ENCODE measurements at regions of chr11 and their contacts with region 1.

Region 1: DNA sequence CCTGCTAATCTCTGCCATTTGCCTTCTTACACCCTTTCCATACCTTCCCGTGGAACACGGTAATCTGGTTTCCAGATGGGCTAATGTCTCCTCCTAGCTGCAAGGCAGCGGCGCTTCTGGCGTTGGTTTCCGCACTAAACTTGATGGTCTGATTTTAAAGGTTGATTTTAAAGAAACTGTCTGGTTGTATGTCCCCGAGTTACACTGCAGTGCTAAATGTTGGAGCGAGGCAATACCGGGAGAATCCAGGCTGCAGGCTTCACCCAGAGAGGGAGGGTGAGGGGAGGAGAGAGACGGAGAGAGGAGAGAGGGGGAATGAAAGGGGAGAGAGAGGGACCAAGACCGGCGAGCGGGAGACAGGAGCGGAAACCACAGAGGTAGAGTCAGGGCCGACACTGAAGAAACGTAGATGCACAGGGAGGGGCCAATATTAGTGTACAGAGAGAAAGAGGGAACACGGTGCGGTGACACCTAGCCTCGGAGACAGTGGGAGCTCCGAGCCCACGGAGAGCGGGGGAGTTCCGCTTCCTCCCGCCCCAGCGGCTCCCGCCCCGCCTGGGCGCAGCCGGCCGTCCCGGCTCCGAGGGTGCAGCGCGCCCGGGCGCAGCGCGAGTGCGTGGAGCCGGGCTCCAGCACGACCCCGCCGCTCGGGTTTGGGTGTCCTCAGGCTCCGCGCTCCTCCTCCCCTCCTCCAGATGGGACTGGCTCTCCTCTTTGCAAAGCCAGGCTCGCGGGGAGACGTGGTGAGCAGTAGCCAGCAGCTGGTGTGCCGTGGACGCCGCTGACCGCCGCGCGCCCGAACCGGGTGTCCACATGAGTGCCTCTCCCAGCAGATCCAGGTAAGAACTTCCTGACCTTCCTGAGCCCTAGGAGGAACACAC is 71.9 kb upstream of the GRAMD1B start:
- DNase-seq: peak; percentile 88
- H3K4me3 Mint-ChIP-seq: peak overlapping the region; percentile 98
- H3K27ac Mint-ChIP-seq: peak overlapping the region; percentile 98
- H3K4me1 Mint-ChIP-seq: peaks cover 62% of the 10 kb centered on the region
- H3K27me3 Mint-ChIP-seq: no peaks in the 10 kb centered on the region

Region 2: DNA sequence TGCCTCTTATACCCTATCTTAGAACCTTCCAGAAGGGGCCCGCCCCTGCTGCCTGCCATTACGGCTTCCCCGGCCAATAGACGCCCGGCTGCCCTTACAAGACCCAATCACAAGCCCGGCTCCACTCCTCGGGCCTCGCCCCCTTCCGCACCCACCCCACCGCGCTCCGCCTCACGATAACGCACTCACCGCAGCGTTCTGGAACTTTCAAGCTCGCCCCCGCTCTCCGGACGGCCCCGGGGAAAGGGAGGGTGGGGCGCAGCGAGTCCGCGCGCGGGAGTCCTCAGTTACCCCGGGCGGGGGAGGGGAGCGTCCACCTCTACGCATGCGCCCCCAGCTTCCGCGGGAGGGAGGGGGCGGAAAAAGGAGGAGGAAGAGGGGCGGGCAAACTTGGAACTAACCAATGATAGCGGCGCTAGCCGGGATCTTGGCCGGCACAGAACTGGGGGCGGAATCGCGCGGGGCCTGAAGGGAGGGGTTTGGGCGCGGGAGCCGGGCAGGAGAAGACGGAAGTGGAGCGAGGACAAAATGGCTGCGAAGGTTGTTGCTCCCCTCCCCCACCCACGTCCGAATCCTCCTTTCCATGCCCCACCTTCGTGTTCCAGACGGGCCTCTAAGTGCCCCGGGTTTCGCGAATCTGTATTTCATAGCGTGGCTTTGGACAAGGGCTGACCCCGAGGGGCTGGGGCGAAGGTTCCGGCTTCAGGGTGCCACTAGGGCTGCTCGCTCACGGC is 295.9 kb before region 1 on chr11:
- intact Hi-C with region 1: loop called (anchors 2 kb)
- DNase-seq: peak; percentile 100
- H3K4me3 Mint-ChIP-seq: peak overlapping the region; percentile 100
- H3K27ac Mint-ChIP-seq: peak overlapping the region; percentile 99
- H3K4me1 Mint-ChIP-seq: peaks cover 46% of the 10 kb centered on the region
- H3K27me3 Mint-ChIP-seq: peaks cover 1% of the 10 kb centered on the region

Region 3: GRCh38 chr11:123338330-123339005 is 19.7 kb before region 1 on chr11:
- intact Hi-C with region 1: loop called (anchors 1 kb)
- DNase-seq: no peak
- H3K4me3 Mint-ChIP-seq: no peak overlapping the region
- H3K27ac Mint-ChIP-seq: no peak overlapping the region
- H3K4me1 Mint-ChIP-seq: peaks cover 6% of the 10 kb centered on the region
- H3K27me3 Mint-ChIP-seq: peaks cover 11% of the 10 kb centered on the region

Region 4: DNA sequence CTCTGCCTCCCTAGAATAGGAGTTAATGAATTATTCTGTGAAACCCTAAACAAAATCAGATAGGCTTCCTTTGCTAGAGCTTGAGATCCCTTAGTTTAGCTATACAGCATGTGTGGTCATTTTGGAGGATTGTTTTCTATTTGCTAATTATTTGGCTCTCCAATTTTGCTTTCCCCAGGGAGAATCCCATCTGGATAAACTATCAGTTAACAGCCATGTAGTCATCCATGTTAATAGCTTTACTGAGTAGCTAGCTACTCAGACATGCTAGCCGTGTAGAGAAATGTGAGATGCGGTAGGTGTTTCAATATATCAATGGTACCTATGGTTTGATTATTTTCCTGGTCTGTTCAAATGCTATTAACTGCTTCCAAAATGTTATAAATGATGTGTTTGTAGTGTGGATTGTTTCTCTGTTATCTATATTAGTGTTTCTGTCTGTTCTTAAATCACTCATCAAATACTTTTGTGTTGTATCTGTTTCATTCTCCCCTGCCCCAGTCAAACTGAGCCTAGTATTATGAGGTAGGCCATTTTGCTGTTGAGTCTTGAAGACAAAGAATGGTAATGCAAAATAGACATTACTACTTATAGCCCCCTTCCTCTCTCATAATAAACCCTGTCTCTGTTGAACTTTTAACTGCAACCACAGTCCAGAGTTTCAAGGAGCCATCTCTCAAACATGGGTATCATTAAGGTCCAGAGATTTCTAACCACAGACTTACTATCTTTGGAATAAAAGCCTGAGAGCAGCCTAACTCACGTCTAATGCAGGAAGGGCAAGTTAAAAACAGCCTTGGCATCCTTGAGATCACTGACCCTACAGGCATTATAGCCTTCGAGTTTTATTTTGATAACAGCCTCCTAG is 15.8 kb after region 1 on chr11:
- intact Hi-C with region 1: no loop called
- DNase-seq: no peak
- H3K4me3 Mint-ChIP-seq: no peak overlapping the region
- H3K27ac Mint-ChIP-seq: peak overlapping the region; percentile 19
- H3K4me1 Mint-ChIP-seq: peaks cover 52% of the 10 kb centered on the region
- H3K27me3 Mint-ChIP-seq: no peaks in the 10 kb centered on the region

Region 5: GRCh38 chr11:123407130-123407995 is 49.2 kb after region 1 on chr11:
- intact Hi-C with region 1: loop called (anchors 1 kb)
- DNase-seq: peak; percentile 88
- H3K4me3 Mint-ChIP-seq: peak overlapping the region; percentile 85
- H3K27ac Mint-ChIP-seq: peak overlapping the region; percentile 77
- H3K4me1 Mint-ChIP-seq: peaks cover 53% of the 10 kb centered on the region
- H3K27me3 Mint-ChIP-seq: no peaks in the 10 kb centered on the region

Region 6: DNA sequence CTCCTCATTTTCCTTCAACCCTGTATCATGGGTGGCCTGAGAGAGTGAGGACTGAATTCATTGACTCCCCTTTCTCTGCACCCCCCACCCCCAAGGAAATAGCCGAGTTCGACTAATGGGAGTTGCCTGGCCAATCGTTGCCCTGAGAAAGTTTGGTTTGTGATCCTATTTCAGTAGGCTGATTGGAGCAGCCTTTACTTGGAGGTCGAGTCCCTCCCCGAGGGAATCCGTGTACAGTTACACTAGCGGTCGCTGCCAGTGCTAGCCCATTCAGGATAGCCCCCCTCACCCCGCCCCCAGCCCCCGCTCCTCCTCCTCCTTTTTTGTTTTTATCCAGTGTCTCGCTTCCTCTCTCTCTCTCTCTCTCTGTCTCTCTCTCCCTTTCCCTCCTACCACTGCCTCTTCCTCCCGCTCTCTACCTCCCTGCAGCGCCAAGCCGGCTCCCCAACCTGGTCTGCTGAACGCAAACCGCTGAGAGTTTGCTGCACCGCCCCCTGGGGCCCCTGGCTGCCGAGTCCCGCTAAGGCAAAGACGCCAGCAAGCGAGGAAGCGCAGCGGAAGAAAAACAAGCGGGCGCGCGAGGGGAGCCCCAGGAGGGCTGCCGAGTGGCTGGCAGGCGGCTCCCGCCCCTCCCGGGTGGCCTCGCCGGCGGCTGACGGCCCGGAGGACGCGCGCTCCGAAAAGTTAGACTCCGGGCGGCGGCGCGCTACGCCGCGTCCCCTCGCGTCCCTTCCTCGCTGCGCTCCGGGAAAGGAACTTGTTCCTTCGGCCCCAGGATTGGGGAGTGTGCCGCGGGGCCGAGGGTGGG is 71.9 kb after region 1 on chr11 and contains the start of gene GRAMD1B:
- intact Hi-C with region 1: loop called (anchors 1 kb)
- DNase-seq: peak; percentile 96
- H3K4me3 Mint-ChIP-seq: peak within 1 kb of the TSS; percentile 87
- H3K27ac Mint-ChIP-seq: peak within 1 kb of the TSS; percentile 90
- H3K4me1 Mint-ChIP-seq: peaks cover 55% of the 10 kb centered on the region
- H3K27me3 Mint-ChIP-seq: no peaks in the 10 kb centered on the region
- total RNA-seq, gene GRAMD1B: 117 TPM in 2 replicates

Region 7: DNA sequence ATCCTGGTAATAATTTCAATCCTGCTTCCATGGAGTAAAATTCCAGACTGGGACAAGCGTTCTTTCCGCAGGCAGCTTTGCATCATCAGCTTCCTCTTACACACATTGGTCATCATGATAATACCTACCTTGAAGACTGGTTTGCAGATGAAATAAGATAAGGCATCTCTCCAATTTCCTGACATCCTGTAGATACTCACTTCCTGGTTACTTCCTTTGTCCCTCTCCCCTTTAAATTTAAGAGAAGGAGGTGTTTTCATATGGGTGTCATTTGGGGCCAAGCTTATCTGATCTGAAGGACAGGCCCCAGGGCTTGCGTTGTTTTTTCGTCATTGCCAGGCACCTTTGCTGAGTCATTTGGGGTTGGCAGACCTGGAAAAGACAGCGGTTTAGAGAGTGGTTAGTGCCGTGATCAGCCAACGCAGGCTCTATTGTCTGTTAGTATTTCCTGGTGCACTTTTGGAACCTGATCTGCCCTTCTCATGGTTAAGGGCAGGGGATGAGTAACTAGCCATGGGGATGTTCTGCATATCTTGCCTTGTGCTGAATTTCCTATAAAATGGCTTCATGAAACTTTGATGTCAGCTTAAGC is 96.0 kb after region 1 on chr11:
- intact Hi-C with region 1: loop called (anchors 1 kb)
- DNase-seq: peak; percentile 91
- H3K4me3 Mint-ChIP-seq: peak overlapping the region; percentile 82
- H3K27ac Mint-ChIP-seq: peak overlapping the region; percentile 94
- H3K4me1 Mint-ChIP-seq: peaks cover 79% of the 10 kb centered on the region
- H3K27me3 Mint-ChIP-seq: no peaks in the 10 kb centered on the region

Region 8: DNA sequence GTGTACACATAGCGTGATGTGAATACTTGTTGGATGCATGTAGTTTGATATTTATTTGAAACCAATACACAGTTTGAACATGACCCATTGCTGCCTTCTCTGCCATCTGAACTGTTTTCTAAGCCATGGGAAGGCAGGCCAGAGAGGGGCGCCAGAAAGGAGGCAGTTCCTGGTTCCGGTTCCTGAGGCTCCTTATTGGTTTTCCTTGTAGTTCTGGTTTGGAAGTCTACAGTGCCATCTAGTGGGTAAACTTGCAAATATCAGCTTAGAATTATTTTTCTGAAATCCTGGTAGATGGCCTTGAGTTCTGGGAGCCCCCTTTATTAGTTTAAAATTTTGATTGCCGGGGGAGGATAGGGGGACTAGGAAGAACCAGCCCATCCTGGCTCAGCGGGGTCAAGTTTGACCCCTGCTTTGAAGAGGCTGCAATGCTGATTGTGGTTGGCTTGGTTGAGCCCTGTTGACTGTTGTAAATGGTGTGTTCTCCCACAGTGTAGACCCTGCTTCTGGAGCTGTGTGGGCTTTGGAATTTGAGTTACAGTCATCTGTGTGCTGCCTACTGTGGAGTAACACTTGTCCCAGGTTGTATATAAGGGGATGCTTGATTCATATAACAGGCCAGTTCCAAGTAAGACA is 120.3 kb after region 1 on chr11:
- intact Hi-C with region 1: loop called (anchors 1 kb)
- DNase-seq: peak; percentile 81
- H3K4me3 Mint-ChIP-seq: peak overlapping the region; percentile 43
- H3K27ac Mint-ChIP-seq: peak overlapping the region; percentile 78
- H3K4me1 Mint-ChIP-seq: peaks cover 55% of the 10 kb centered on the region
- H3K27me3 Mint-ChIP-seq: no peaks in the 10 kb centered on the region

Measured in activated CD4-positive, alpha-beta T cell treated with anti-CD3 and anti-CD28 coated beads, Interleukin-2, amount 10 ng/mL, durations not matched to agents 24 days and 14 days (primary cell).